Activated naive CD4-positive, alpha-beta T cell treated with anti-CD3 and anti-CD28 coated beads for 36 hours (primary cell): ENCODE measurements at regions of chr3 and their contacts with region 1.

Region 1: DNA sequence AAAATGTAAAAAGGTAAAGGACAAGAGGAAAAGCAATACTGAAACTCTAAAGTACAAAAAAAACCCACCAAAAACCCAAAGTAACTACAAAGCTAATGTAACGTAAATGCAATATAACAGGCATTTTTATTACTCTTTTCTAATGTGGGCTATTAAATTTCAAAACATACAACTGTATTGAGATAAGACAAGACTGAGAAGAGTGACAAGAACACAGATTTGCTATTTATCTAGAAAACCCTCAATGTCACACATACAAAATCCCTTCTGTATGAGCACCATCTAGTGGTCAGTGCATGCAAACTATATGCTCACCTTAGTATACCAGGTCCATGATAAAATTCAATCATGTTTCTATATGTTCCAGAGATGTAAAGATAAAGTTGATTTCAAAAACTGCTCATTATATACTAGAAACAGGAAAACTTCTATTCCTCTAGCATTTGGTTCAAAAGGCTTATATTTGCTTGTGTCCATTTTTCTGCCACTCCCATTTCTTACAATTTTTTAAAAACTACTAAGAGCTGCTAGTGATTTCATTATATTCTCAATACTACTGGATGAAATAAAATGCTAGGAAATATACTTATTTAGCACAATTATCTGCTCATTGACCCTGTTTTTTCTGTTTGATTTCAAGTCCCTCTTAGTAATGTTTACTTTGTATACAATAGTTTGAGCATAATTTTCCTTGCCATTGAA is 111.4 kb downstream of the DLG1 start:
- DNase-seq: peak; percentile 30
- H3K4me3 Mint-ChIP-seq: no peak overlapping the region
- H3K27ac Mint-ChIP-seq: no peak overlapping the region
- H3K4me1 Mint-ChIP-seq: peaks cover 16% of the 10 kb centered on the region
- H3K27me3 Mint-ChIP-seq: no peaks in the 10 kb centered on the region

Region 2: DNA sequence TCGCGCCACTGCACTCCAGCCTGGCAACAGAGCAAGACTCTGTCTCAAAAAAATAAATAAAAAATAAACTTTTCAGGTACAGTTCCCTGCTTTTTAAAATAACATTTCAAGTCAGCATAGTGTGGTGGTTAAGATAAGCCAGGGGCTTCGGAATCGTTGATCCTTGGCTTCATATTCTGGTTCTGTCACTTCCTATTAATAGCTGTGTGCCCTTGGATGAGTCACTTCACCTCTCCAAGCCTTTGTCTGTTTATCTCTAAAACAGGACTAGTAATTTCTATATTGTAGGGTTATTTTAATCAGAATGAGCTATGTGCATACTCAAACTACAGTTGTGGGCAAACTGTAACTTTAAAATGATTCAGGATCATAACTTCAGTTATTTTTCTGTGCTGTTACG is 373.1 kb before region 1 on chr3:
- CTCF ChIA-PET with region 1: no interaction called
- intact Hi-C with region 1: no loop called
- DNase-seq: no peak
- H3K4me3 Mint-ChIP-seq: no peak overlapping the region
- H3K27ac Mint-ChIP-seq: no peak overlapping the region
- H3K4me1 Mint-ChIP-seq: no peaks in the 10 kb centered on the region
- H3K27me3 Mint-ChIP-seq: no peaks in the 10 kb centered on the region

Region 3: GRCh38 chr3:196837819-196838420 is 349.1 kb before region 1 on chr3:
- CTCF ChIA-PET with region 1: no interaction called
- intact Hi-C with region 1: loop called (anchors 5 kb)
- DNase-seq: peak; percentile 90
- H3K4me3 Mint-ChIP-seq: no peak overlapping the region
- H3K27ac Mint-ChIP-seq: no peak overlapping the region
- H3K4me1 Mint-ChIP-seq: no peaks in the 10 kb centered on the region
- H3K27me3 Mint-ChIP-seq: no peaks in the 10 kb centered on the region

Region 4: DNA sequence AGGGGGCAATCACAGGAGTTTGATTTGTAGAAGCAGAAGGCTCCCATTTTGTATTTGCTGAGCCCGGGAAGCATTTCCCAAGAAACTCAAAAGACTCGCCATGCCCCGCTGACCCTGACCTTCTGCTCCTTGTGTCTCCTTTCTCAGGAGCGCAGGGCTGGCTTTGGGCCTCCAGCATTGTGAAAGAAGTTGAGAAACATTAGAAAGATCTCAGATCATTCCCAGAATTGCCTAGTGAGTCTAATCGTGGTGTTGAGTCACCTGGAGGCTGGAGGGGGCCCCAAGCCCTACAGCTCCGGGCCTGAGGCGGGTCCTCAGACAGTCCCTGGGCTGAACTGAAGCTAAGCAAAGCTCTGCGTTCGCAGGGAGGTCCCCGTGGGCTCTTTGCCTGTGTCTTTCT is 207.5 kb before region 1 on chr3:
- CTCF ChIA-PET with region 1: interaction called, 3 read pairs
- intact Hi-C with region 1: loop called (anchors 1 kb)
- DNase-seq: no peak
- H3K4me3 Mint-ChIP-seq: no peak overlapping the region
- H3K27ac Mint-ChIP-seq: no peak overlapping the region
- H3K4me1 Mint-ChIP-seq: peaks cover 6% of the 10 kb centered on the region
- H3K27me3 Mint-ChIP-seq: peaks cover 7% of the 10 kb centered on the region

Region 5: DNA sequence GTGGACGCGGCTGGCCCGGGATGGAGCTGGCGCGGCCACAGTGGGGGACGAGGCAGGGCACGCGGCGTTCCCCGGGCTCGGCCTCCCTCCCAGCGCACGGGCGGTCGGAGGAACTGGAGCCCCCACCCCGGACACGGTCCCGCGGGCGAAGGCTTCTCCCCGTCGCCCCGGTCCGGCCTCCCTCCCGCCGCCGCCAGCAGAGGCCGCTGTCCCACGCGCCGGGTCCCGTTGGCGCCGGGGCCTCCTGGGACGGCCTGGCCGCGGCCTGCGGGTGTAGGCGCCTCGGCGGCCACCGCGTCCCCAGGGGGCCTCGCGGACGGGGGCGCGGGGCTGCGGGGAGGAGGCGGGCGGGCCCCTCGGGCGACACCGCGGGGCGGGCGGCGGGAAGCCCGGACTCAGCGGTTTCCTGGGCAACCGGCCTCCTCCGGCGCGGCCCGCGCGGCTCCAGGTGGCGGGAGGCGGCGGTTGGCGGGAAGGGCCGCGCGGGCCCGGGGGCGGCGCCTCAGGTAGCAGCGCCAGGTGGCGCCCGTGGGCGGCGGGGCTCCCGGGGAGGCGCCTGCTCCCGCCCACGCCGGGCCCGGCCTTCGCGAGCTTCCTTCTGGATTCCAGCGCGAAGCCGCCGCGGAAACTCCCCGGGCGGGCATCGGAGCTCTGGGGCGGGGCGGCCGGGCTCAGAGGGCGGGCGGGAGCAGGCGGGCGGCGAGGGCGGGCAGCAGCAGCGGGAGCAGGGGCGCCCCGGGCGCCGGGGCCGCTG is 184.2 kb before region 1 on chr3:
- CTCF ChIA-PET with region 1: interaction called, 8 read pairs
- intact Hi-C with region 1: loop called (anchors 1 kb)
- DNase-seq: peak; percentile 92
- H3K4me3 Mint-ChIP-seq: no peak overlapping the region
- H3K27ac Mint-ChIP-seq: no peak overlapping the region
- H3K4me1 Mint-ChIP-seq: peaks cover 8% of the 10 kb centered on the region
- H3K27me3 Mint-ChIP-seq: no peaks in the 10 kb centered on the region

Region 6: GRCh38 chr3:197117092-197117491 is 69.9 kb before region 1 on chr3:
- CTCF ChIA-PET with region 1: no interaction called
- intact Hi-C with region 1: no loop called
- DNase-seq: no peak
- H3K4me3 Mint-ChIP-seq: no peak overlapping the region
- H3K27ac Mint-ChIP-seq: no peak overlapping the region
- H3K4me1 Mint-ChIP-seq: peaks cover 7% of the 10 kb centered on the region
- H3K27me3 Mint-ChIP-seq: no peaks in the 10 kb centered on the region

Region 7: DNA sequence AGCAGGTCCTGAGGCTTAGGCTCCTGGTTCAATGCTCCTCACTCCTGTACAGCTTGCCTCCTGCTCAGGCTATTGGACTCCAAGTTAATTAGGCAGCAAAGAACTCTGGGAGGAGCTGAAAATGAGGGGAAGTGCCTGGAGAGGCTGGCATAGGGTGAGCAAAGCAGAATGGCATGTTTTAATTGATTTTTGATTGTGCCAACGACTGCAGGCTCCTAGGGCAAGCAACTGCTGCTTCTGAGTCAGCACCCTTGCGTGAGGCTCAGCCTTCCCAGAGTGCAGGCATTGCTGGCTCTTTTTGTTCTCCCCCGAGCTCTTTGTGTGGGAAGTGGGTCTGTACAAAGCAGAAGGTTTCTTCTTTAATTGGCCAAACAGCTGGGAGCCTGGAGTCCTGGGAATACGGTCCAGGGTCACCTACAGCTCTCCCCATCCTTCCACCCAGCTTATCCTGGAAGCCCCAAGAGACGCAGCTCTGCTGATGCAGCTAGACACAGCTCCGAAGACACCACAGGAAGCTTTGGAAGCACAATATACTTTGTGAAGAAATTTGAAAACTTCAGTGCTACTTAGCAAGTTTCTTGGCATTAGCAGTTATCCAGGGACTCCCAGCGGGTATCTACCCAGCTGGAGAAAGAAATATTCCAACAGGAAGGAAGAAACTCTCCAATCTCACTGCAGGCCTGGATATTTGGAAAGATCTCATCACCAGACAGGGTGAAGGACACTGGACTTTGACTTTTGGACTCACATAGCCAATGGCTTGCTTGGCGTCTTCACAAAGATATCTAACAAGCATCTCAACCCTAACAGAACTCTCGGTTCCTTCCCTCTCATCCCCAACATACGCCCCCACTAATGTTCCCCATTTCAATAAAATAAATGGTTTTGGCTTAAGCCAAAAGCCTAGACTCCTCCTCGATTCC is 292.0 kb after region 1 on chr3:
- CTCF ChIA-PET with region 1: no interaction called
- intact Hi-C with region 1: no loop called
- DNase-seq: no peak
- H3K4me3 Mint-ChIP-seq: no peak overlapping the region
- H3K27ac Mint-ChIP-seq: no peak overlapping the region
- H3K4me1 Mint-ChIP-seq: no peaks in the 10 kb centered on the region
- H3K27me3 Mint-ChIP-seq: peaks cover 3% of the 10 kb centered on the region